Naive thymus-derived CD4-positive, alpha-beta T cell (primary cell): ENCODE measurements at regions of chr1 and their contacts with region 1.

Region 1: DNA sequence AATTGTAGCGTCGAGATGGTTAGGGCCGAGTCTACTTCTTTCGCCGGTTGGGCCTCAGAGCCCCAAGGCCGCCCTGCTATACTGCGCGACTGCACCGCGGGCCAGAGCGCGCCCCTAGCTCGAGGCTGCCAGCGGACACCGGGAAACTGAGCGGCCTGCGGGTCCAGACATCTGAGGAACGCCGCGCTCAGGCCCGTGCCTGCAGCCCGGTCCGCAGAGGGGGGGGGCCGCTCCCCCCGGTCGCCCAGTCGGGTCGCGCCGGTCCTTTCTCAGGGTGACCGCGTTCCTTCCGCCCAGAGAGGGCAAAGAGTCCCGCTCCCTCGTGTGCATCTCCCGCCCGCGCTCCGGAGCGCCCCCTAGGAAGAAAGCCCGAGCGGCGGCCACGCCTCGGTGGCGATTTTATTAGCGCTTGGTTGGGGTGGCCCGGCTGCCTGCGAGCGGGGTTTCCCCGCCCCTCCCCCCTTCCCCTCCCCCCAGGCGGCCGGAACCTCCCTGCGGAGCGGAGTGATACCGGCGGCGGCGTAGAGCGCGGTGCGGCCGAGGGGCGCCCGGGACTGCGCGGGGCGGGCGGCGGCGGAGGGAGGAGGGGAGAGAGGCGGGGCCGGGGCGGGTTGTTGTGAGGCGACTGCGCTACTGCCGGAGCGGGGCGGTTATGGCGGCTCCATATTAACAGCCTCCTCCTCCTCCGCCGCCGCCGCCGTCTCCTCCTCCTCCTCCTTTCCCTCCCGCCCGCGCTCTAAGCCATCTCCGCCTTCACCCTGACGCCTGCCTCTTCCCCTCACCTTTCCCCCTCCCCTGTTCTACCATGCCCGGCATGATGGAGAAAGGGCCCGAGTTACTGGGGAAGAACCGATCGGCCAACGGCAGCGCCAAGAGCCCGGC is at the start of gene RCOR3:
- DNase-seq: peak; percentile 81 to 92 (median 88)
- ATAC-seq: peak; percentile 89
- H3K4me3 ChIP-seq: peak within 1 kb of the TSS; percentile 87
- H3K4me3 Mint-ChIP-seq: peak within 1 kb of the TSS; percentile 86 to 97 (median 92)
- H3K27ac ChIP-seq: peak within 1 kb of the TSS; percentile 89
- H3K27ac Mint-ChIP-seq: peak within 1 kb of the TSS; percentile 90 to 99 (median 93)
- H3K4me1 ChIP-seq: peaks cover 6 to 17% of the 10 kb centered on the region in 2 donors
- H3K4me1 Mint-ChIP-seq: peaks cover 17 to 33% (median 23%) of the 10 kb centered on the region in 7 donors
- H3K27me3 ChIP-seq: no peaks in the 10 kb centered on the region
- H3K27me3 Mint-ChIP-seq: no peaks in the 10 kb centered on the region
- total RNA-seq, gene RCOR3: 42.3 to 98.0 (median 82.8) TPM

Region 2: GRCh38 chr1:210328746-210329503 is 930.1 kb before region 1 on chr1 and contains the start of gene HHAT:
- CTCF ChIA-PET with region 1: no interaction called
- POLR2A ChIA-PET with region 1: no interaction called
- intact Hi-C with region 1: loop called in 1 of 2 experiments (anchors 5 kb)
- DNase-seq: peak; percentile 25 to 74 (median 38)
- ATAC-seq: peak; percentile 67
- H3K4me3 ChIP-seq: peak within 1 kb of the TSS; percentile 66
- H3K4me3 Mint-ChIP-seq: peak within 1 kb of the TSS; percentile 85 to 98 (median 94)
- H3K27ac ChIP-seq: peak within 1 kb of the TSS; percentile 61
- H3K27ac Mint-ChIP-seq: peak within 1 kb of the TSS; percentile 74 to 95 (median 89)
- H3K4me1 ChIP-seq: peaks cover 8 to 33% of the 10 kb centered on the region in 2 donors
- H3K4me1 Mint-ChIP-seq: peaks cover 13 to 31% (median 21%) of the 10 kb centered on the region in 7 donors
- H3K27me3 ChIP-seq: no peaks in the 10 kb centered on the region
- H3K27me3 Mint-ChIP-seq: peaks cover under 1 to 35% (median 10%) of the 10 kb centered on the region in 5 donors
- total RNA-seq, gene HHAT: 1.1 to 3.8 (median 2.7) TPM

Region 3: GRCh38 chr1:210527091-210527490 is 731.9 kb before region 1 on chr1:
- CTCF ChIA-PET with region 1: no interaction called
- POLR2A ChIA-PET with region 1: no interaction called
- intact Hi-C with region 1: no loop called
- DNase-seq: no peak
- ATAC-seq: no peak
- H3K4me3 ChIP-seq: no peak overlapping the region
- H3K4me3 Mint-ChIP-seq: no peak overlapping the region
- H3K27ac ChIP-seq: no peak overlapping the region
- H3K27ac Mint-ChIP-seq: no peak overlapping the region
- H3K4me1 ChIP-seq: no peaks in the 10 kb centered on the region
- H3K4me1 Mint-ChIP-seq: no peaks in the 10 kb centered on the region
- H3K27me3 ChIP-seq: no peaks in the 10 kb centered on the region
- H3K27me3 Mint-ChIP-seq: peaks cover 0 to 4% (median 0%) of the 10 kb centered on the region in 5 donors

Region 4: GRCh38 chr1:211236633-211237320 is 22.2 kb before region 1 on chr1:
- CTCF ChIA-PET with region 1: no interaction called
- POLR2A ChIA-PET with region 1: interaction called, 13 read pairs
- intact Hi-C with region 1: no loop called
- DNase-seq: no peak
- ATAC-seq: no peak
- H3K4me3 ChIP-seq: no peak overlapping the region
- H3K4me3 Mint-ChIP-seq: no peak overlapping the region
- H3K27ac ChIP-seq: no peak overlapping the region
- H3K27ac Mint-ChIP-seq: no peak overlapping the region
- H3K4me1 ChIP-seq: no peaks in the 10 kb centered on the region
- H3K4me1 Mint-ChIP-seq: peaks cover 0 to 3% (median 0%) of the 10 kb centered on the region in 7 donors
- H3K27me3 ChIP-seq: no peaks in the 10 kb centered on the region
- H3K27me3 Mint-ChIP-seq: peaks cover 0 to 16% (median 0%) of the 10 kb centered on the region in 5 donors

Region 5: DNA sequence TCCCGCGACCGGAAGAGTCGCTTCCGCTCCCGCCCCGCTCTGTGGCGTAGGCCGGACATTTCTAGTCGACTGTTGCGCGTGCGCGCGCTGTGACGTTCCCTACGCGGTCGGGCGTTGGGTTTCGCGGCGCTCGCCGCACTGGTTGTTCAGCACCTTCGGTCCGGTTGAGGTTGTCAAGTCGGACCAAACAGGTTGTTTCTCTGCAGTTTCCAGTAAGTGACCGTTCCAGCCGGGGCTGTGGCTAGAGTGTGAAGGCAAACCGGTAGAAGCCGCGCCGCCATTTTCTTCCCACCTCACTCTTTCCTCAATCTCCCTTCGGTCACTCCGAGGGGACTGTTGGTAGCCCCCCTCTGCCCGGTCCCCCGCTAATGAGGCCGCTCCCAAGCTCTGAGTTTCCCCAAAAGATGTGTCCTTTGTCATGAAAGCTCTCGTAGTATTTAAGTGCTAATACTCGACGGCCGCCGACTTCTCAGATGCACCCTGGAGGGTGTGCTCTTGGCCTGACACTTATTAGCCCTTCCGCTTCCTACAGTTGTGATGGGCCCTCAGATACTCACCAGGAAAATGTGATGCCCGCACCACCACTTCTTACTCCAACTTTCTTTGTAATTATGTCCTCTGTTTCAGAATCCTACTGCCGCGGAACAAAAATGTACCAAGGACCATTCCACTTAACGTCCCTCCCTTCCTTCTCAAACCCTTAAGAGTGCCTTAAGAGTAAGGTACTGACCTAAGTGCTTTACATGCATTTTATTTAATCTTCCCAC is 123.9 kb after region 1 on chr1:
- CTCF ChIA-PET with region 1: no interaction called
- POLR2A ChIA-PET with region 1: no interaction called
- intact Hi-C with region 1: loop called (anchors 1 to 2 kb)
- DNase-seq: peak; percentile 53 to 85 (median 64)
- ATAC-seq: peak; percentile 94
- H3K4me3 ChIP-seq: peak overlapping the region; percentile 77
- H3K4me3 Mint-ChIP-seq: peak overlapping the region; percentile 87 to 97 (median 92)
- H3K27ac ChIP-seq: peak overlapping the region; percentile 80
- H3K27ac Mint-ChIP-seq: peak overlapping the region; percentile 92 to 98 (median 95)
- H3K4me1 ChIP-seq: peaks cover 5% of the 10 kb centered on the region in 2 donors
- H3K4me1 Mint-ChIP-seq: peaks cover 0 to 39% (median 31%) of the 10 kb centered on the region in 7 donors
- H3K27me3 ChIP-seq: no peaks in the 10 kb centered on the region
- H3K27me3 Mint-ChIP-seq: peaks cover 0 to 5% (median 0%) of the 10 kb centered on the region in 5 donors

Region 6: DNA sequence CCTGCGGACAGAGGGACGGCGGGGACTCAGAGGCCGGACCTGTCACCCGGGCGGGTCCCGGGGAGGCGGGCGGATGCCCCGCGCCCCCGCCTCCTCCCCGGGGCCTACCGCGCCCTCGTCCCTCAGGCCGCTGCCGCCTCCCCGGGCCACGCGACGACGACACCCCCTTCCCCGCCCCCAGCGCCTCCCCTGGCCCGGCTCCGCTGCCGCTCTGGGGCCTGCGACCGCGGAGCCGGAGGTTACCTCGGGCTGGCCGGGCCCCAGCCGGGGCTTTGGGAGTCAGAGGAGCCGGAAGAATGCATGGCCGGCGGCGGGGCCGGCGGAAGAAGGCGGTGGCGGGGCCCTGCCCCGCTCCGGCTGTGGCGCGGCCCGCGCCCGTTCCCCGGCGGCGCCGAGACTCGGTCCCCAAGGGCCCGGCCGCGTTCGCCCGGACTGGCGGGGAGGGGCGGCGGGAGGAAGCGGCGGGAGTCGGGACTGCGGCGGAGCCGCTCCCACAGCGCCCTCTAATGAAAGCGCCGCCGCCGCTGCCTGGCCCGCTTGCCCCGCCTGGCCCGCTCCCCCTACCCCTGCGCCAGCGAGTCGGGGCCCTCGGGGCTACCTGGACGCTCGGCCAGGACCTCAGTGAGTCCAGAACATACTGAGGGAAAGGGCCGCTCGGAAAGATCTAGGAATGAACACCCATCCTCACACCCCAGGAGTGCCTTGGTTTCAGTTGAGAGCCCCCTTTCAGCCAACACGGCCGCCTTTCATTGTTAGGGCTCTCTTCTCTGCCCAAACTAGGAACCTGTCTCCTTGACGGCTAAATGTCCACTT is 571.5 kb after region 1 on chr1 and contains the start of gene LPGAT1:
- CTCF ChIA-PET with region 1: no interaction called
- POLR2A ChIA-PET with region 1: no interaction called
- intact Hi-C with region 1: loop called in 1 of 2 experiments (anchors 5 kb)
- DNase-seq: peak; percentile 28 to 81 (median 54)
- ATAC-seq: peak; percentile 92
- H3K4me3 ChIP-seq: peak within 1 kb of the TSS; percentile 68
- H3K4me3 Mint-ChIP-seq: peak within 1 kb of the TSS; percentile 88 to 97 (median 90)
- H3K27ac ChIP-seq: peak within 1 kb of the TSS; percentile 64
- H3K27ac Mint-ChIP-seq: peak within 1 kb of the TSS; percentile 60 to 94 (median 85)
- H3K4me1 ChIP-seq: peaks cover 20 to 40% of the 10 kb centered on the region in 2 donors
- H3K4me1 Mint-ChIP-seq: peaks cover 34 to 69% (median 64%) of the 10 kb centered on the region in 7 donors
- H3K27me3 ChIP-seq: no peaks in the 10 kb centered on the region
- H3K27me3 Mint-ChIP-seq: peaks cover 0 to 3% (median 0%) of the 10 kb centered on the region in 5 donors
- total RNA-seq, gene LPGAT1: 11.7 to 76.1 (median 19.3) TPM

Region 7: GRCh38 chr1:213015099-213016050 is 1756.4 kb after region 1 on chr1 and contains the start of gene ANGEL2:
- CTCF ChIA-PET with region 1: no interaction called
- POLR2A ChIA-PET with region 1: no interaction called
- intact Hi-C with region 1: loop called (anchors 5 to 10 kb)
- DNase-seq: peak; percentile 77 to 97 (median 93)
- ATAC-seq: peak; percentile 99
- H3K4me3 ChIP-seq: peak within 1 kb of the TSS; percentile 87
- H3K4me3 Mint-ChIP-seq: peak within 1 kb of the TSS; percentile 92 to 100 (median 100)
- H3K27ac ChIP-seq: peak within 1 kb of the TSS; percentile 82
- H3K27ac Mint-ChIP-seq: peak within 1 kb of the TSS; percentile 94 to 100 (median 99)
- H3K4me1 ChIP-seq: peaks cover 12 to 19% of the 10 kb centered on the region in 2 donors
- H3K4me1 Mint-ChIP-seq: peaks cover 26 to 47% (median 40%) of the 10 kb centered on the region in 7 donors
- H3K27me3 ChIP-seq: no peaks in the 10 kb centered on the region
- H3K27me3 Mint-ChIP-seq: peaks cover 0 to 7% (median 0%) of the 10 kb centered on the region in 5 donors
- total RNA-seq, gene ANGEL2: 57.8 to 96.5 (median 63.4) TPM